Common myeloid progenitor, CD34-positive (primary cell): ENCODE measurements at regions of chr13 and their contacts with region 1.

Region 1: DNA sequence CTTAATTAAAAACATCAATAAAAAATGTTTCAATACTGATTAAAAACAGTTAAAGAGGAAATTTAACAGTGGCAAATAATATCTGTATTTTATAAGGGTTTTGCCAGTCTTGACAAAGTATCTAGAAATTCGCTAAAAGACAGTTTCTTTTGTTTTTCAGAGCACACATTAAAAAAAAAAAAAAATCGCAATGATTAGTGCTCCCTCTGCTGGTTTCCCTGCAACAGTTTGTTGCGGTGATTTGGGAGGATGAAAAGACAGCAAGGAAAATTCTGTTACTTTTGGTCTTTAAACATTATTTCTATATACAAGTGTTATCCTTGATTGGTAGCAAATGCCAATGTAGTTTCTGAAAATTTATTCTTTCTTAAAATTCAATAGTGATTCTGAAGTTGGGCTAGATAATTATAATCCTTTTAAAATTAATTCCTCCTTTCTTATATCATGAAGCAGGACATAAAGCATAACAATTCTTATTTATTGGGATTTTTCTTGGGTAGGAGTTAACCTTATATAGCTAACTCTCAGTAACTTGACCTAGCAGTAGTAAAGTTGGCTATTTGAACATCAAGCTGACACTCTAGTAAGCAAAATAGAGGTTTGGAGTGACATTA is 23.1 kb upstream of the SPRY2 start:
- DNase-seq: peak in 2 of 3 donors; percentile 33 to 45
- H3K4me3 ChIP-seq: peak overlapping the region in 1 of 7 experiments; percentile 59
- H3K27ac ChIP-seq: no peak overlapping the region
- H3K4me1 ChIP-seq: peaks cover 3 to 31% (median 25%) of the 10 kb centered on the region in 4 experiments
- H3K27me3 ChIP-seq: no peaks in the 10 kb centered on the region

Region 2: DNA sequence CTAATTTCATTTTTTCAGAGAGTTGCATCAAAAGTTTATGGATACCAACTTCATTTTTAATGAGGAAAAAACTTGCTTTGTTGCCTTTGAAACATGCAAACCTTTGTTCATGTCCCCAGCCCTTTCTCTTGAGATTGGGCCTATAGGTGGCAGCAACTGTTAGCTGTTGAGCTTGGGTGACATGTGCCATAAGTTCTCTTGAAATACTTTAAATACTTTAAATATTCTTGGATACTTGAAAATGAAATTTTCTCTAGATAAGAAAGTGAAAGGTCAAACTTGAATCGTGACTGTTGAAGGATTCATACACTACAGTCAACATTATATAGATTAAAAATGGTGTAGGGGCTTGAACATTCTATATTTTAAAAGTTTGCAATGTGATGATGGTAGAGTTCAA is 588.2 kb before region 1 on chr13:
- CTCF ChIA-PET with region 1: interaction called, 19 read pairs
- POLR2A ChIA-PET with region 1: no interaction called
- DNase-seq: peak; percentile 72 to 87 (median 84)
- H3K4me3 ChIP-seq: no peak overlapping the region
- H3K27ac ChIP-seq: no peak overlapping the region
- H3K4me1 ChIP-seq: no peaks in the 10 kb centered on the region
- H3K27me3 ChIP-seq: no peaks in the 10 kb centered on the region

Region 3: GRCh38 chr13:80342471-80343380 is 21.3 kb before region 1 on chr13:
- CTCF ChIA-PET with region 1: interaction called, 19 read pairs
- POLR2A ChIA-PET with region 1: no interaction called
- DNase-seq: peak; percentile 66 to 81 (median 79)
- H3K4me3 ChIP-seq: peak overlapping the region; percentile 50 to 97 (median 83)
- H3K27ac ChIP-seq: no peak overlapping the region
- H3K4me1 ChIP-seq: peaks cover 23 to 42% (median 35%) of the 10 kb centered on the region in 4 experiments
- H3K27me3 ChIP-seq: no peaks in the 10 kb centered on the region

Region 4: DNA sequence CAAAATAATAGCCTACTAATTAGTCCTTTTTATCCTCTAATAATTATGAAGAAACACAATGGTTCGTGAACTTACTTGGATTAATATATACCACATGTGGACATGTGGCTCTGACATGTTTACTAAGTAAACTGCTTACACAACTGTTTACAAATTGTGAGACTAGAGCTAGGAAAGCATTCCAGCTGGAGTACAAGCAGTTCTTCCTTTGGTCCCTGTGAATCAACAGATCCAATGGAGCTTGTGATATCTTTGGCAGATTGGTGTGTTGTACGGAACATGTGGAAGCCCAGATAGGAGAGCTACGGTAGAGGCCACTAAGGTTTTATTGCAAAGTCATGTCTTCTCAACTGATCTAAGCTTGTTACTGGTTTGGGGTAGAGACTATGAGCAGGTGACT is 122.4 kb after region 1 on chr13:
- CTCF ChIA-PET with region 1: no interaction called
- POLR2A ChIA-PET with region 1: no interaction called
- DNase-seq: peak in 1 of 3 donors; percentile 11
- H3K4me3 ChIP-seq: no peak overlapping the region
- H3K27ac ChIP-seq: no peak overlapping the region
- H3K4me1 ChIP-seq: no peaks in the 10 kb centered on the region
- H3K27me3 ChIP-seq: no peaks in the 10 kb centered on the region